Heart left ventricle (tissue), 16 donors: ENCODE measurements at regions of chr7 and their contacts with region 1.

Region 1: DNA sequence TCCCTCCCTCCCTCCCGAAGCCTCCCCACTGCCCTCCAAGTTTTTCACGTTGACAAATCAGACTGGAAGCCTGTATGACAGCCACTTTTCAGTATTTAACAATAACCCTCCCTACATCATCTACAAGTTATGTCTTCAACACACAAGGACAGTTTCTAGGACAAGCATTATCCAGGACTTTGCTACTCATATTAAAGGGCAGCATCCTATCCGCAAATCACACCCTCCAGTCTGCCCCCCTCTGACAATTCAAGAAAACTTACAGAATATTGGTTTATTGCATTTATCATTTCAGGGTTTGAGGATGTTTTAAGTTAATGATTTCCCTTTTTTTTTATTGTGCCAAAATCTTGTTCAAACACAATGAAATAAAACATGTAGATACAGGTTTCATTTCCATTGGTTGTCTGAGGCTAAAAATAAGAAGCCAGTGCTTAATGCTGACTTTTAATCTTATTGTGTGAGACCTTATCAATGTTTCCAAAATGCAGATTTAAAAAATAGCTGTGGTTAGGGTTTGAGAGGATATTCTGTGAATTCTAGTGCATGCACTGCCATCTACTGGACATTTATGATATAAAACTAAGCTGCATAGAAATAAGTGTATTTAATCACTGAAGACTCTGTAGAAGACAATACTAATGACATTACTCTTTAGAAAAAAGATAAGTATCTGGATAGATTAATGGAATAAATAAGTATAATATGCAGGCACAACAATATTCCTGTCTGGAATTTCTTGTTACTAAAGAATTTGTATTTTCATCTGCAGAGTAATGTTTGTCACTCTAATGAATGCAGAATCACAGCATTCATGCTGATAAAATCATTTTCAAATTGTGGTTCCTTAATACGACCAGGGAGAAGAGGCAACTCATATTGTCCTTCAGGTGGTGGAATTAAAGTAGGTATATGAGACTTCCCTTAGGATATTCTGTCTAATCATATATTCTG is 64.1 kb downstream of the CAV1 start:
- DNase-seq: no peak
- ATAC-seq: peak; percentile 29 to 58 (median 50)
- H3K4me3 ChIP-seq: no peak overlapping the region
- H3K27ac ChIP-seq: peak overlapping the region in 9 of 12 donors; percentile 10 to 57 (median 35)
- H3K4me1 ChIP-seq: peaks cover 0 to 43% (median 31%) of the 10 kb centered on the region in 12 donors
- H3K27me3 ChIP-seq: peaks cover 0 to 5% (median 0%) of the 10 kb centered on the region in 9 donors
- CTCF ChIP-seq: peak; percentile 58 to 88 (median 75)
- POLR2A ChIP-seq: no peak

Region 2: DNA sequence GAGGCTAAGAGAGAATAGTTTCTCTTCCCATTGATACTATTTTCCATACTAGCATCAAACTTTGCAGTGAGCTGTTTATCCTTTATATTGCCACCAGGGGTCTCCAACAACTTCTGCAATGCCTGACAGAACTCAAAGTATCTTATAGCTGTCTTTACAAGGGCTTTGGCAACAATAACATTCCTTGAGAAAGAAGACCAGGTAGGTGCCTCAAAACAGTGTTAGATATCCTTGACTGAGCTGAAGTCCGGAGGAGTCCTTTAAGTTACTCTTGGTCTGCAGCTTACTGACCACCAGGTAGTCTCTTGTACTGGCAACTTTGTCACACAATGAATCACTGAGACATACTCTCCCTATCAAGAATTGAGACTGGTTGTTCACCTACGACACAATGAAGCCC is 408.6 kb before region 1 on chr7:
- intact Hi-C with region 1: loop called in 7 of 10 experiments (anchors 5 to 10 kb)
- DNase-seq: no peak
- ATAC-seq: peak in 2 of 4 donors; percentile 22 to 53
- H3K4me3 ChIP-seq: no peak overlapping the region
- H3K27ac ChIP-seq: no peak overlapping the region
- H3K4me1 ChIP-seq: no peaks in the 10 kb centered on the region
- H3K27me3 ChIP-seq: no peaks in the 10 kb centered on the region
- CTCF ChIP-seq: peak; percentile 64 to 88 (median 79)
- POLR2A ChIP-seq: no peak

Region 3: DNA sequence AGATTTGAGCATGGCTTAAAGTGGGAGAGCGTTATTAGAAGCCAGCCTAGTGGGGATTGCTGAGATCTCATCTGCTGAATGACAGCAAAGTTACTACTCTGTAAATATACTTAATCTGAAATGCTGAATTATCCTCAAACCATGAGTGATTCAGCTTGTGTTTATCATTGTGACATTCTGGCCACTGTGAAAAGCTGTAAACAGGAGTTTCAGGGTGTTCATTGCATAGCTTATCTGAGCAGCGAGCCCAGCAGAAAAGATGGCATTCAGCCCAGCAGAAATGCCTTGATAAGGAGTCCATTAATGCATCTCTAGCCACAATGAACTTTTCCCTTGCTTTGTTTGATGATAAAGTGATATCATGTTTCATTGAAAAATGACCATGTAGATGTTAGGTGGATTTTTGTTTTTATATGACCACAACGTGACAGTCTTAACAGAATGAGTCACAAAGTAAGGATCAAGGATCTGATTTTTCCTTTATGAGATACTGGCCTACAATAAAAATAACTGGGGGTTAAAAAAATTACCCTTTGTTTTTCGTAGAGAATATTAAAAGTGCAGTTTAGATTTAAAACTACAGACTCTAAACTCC is 370.8 kb before region 1 on chr7:
- intact Hi-C with region 1: no loop called
- DNase-seq: peak in 1 of 5 donors; percentile 32
- ATAC-seq: peak in 1 of 4 donors; percentile 47
- H3K4me3 ChIP-seq: no peak overlapping the region
- H3K27ac ChIP-seq: peak overlapping the region in 3 of 12 donors; percentile 23 to 86 (median 38)
- H3K4me1 ChIP-seq: peaks cover 0 to 82% (median 36%) of the 10 kb centered on the region in 12 donors
- H3K27me3 ChIP-seq: no peaks in the 10 kb centered on the region
- CTCF ChIP-seq: no peak
- POLR2A ChIP-seq: no peak

Region 4: GRCh38 chr7:116443101-116443523 is 145.8 kb before region 1 on chr7:
- intact Hi-C with region 1: loop called in 6 of 10 experiments (anchors 5 to 10 kb)
- DNase-seq: no peak
- ATAC-seq: peak in 2 of 4 donors; percentile 27 to 40
- H3K4me3 ChIP-seq: no peak overlapping the region
- H3K27ac ChIP-seq: peak overlapping the region in 5 of 12 donors; percentile 3 to 81 (median 59)
- H3K4me1 ChIP-seq: peaks cover 3 to 63% (median 40%) of the 10 kb centered on the region in 12 donors
- H3K27me3 ChIP-seq: no peaks in the 10 kb centered on the region
- CTCF ChIP-seq: no peak
- POLR2A ChIP-seq: no peak

Region 5: GRCh38 chr7:116671681-116672595 is 83.0 kb after region 1 on chr7 and contains the start of gene MET:
- intact Hi-C with region 1: loop called in 6 of 10 experiments (anchors 1 to 10 kb)
- DNase-seq: peak; percentile 74 to 85 (median 81)
- ATAC-seq: peak; percentile 80 to 95 (median 92)
- H3K4me3 ChIP-seq: peak within 1 kb of the TSS; percentile 40 to 77 (median 62)
- H3K27ac ChIP-seq: peak within 1 kb of the TSS; percentile 54 to 87 (median 82)
- H3K4me1 ChIP-seq: peaks cover 0 to 36% (median 8%) of the 10 kb centered on the region in 12 donors
- H3K27me3 ChIP-seq: peaks cover 0 to 22% (median 0%) of the 10 kb centered on the region in 9 donors
- CTCF ChIP-seq: peak; percentile 32 to 67 (median 52)
- POLR2A ChIP-seq: peak in 1 of 2 donors; percentile 27
- total RNA-seq, gene MET: 11.1 to 29.7 (median 16.4) TPM

Region 6: GRCh38 chr7:116736927-116737715 is 148.2 kb after region 1 on chr7:
- intact Hi-C with region 1: no loop called
- DNase-seq: no peak
- ATAC-seq: no peak
- H3K4me3 ChIP-seq: no peak overlapping the region
- H3K27ac ChIP-seq: no peak overlapping the region
- H3K4me1 ChIP-seq: peaks cover 0 to 5% (median 0%) of the 10 kb centered on the region in 12 donors
- H3K27me3 ChIP-seq: no peaks in the 10 kb centered on the region
- CTCF ChIP-seq: no peak
- POLR2A ChIP-seq: no peak

Region 7: GRCh38 chr7:116809636-116810266 is 220.8 kb after region 1 on chr7:
- intact Hi-C with region 1: loop called (anchors 2 to 5 kb)
- DNase-seq: peak in 1 of 5 donors; percentile 36
- ATAC-seq: peak; percentile 68 to 80 (median 74)
- H3K4me3 ChIP-seq: no peak overlapping the region
- H3K27ac ChIP-seq: no peak overlapping the region
- H3K4me1 ChIP-seq: peaks cover 0 to 5% (median 0%) of the 10 kb centered on the region in 12 donors
- H3K27me3 ChIP-seq: no peaks in the 10 kb centered on the region
- CTCF ChIP-seq: peak; percentile 52 to 82 (median 66)
- POLR2A ChIP-seq: no peak

Region 8: DNA sequence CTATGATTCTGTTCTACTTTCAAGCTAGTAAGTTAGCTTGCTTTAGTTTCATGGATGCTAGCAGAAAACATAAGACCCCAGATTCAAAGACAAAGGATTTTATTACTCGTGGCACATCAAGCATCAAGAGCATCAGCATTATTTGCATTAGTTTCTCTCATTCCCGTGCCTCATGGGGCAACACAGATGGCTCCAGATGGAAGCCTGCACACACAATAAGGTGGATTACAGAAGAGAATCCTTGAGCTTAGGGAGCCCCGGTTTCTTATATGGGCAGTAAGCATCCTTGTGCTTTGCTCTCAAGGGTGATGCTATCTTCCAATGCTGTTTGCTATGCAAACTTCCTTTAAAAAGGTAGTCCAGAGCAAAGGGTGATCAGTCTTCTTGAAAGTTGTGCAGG is 262.8 kb after region 1 on chr7:
- intact Hi-C with region 1: no loop called
- DNase-seq: no peak
- ATAC-seq: no peak
- H3K4me3 ChIP-seq: no peak overlapping the region
- H3K27ac ChIP-seq: no peak overlapping the region
- H3K4me1 ChIP-seq: no peaks in the 10 kb centered on the region
- H3K27me3 ChIP-seq: peaks cover 0 to 6% (median 0%) of the 10 kb centered on the region in 9 donors
- CTCF ChIP-seq: no peak
- POLR2A ChIP-seq: no peak